HepG2 (cell line): ENCODE measurements at regions of chr6 and their contacts with region 1.

Region 1: GRCh38 chr6:106913676-106914280 is 60.8 kb downstream of the CD24 start:
- DNase-seq: peak; percentile 64
- ATAC-seq: no peak
- H3K4me3 ChIP-seq: no peak overlapping the region
- H3K27ac ChIP-seq: no peak overlapping the region
- H3K4me1 ChIP-seq: peaks cover 43% of the 10 kb centered on the region
- H3K27me3 ChIP-seq: no peaks in the 10 kb centered on the region
- CTCF ChIP-seq: no peak
- EP300 ChIP-seq: no peak
- POLR2A ChIP-seq: no peak
- RAD21 ChIP-seq: no peak

Region 2: GRCh38 chr6:106629103-106629858 is 284.5 kb before region 1 on chr6 and contains the starts of genes QRSL1 and RTN4IP1:
- CTCF ChIA-PET with region 1: no interaction called
- POLR2A ChIA-PET with region 1: no interaction called
- in situ Hi-C with region 1: no loop called
- intact Hi-C with region 1: loop called (anchors 10 kb)
- DNase-seq: peak; percentile 91
- ATAC-seq: peak; percentile 98
- H3K4me3 ChIP-seq: peak within 1 kb of the TSS; percentile 93 to 99 (median 95)
- H3K27ac ChIP-seq: peak within 1 kb of the TSS; percentile 90
- H3K4me1 ChIP-seq: peaks cover 43% of the 10 kb centered on the region
- H3K27me3 ChIP-seq: peaks cover 0 to 2% of the 10 kb centered on the region in 2 experiments; a peak in 1 of 5 replicates
- CTCF ChIP-seq: no peak
- EP300 ChIP-seq: no peak
- POLR2A ChIP-seq: peak; percentile 64 to 82
- RAD21 ChIP-seq: peak; percentile 19; the same call in 1 of the 2 replicates
- total RNA-seq, gene QRSL1: 22.3 and 24.2 TPM in 2 replicates
- total RNA-seq, gene RTN4IP1: 17.2 and 25.2 TPM in 2 replicates